ENCODE measurements at regions of chr19 and their contacts with region 1.

Region 1: GRCh38 chr19:6737284-6738046 is at the start of gene GPR108:
- DNase-seq: peak; percentile 100
- H3K4me3 ChIP-seq: peak within 1 kb of the TSS; percentile 72 to 97 (median 78)
- H3K4me3 Mint-ChIP-seq: peak within 1 kb of the TSS; percentile 95 to 97
- H3K27ac ChIP-seq: peak within 1 kb of the TSS; percentile 72 to 87
- H3K27ac Mint-ChIP-seq: peak within 1 kb of the TSS; percentile 89 to 98 (median 96)
- H3K4me1 ChIP-seq: peaks cover 50 to 56% of the 10 kb centered on the region in 2 donors
- H3K4me1 Mint-ChIP-seq: peaks cover 48% of the 10 kb centered on the region
- H3K27me3 ChIP-seq: peaks cover 0 to 8% of the 10 kb centered on the region in 2 donors
- H3K27me3 Mint-ChIP-seq: peaks cover 2 to 18% (median 17%) of the 10 kb centered on the region in 3 donors
- CTCF ChIP-seq: no peak
- polyA plus RNA-seq, gene GPR108: 90.9 to 147 (median 129) TPM

Region 2: DNA sequence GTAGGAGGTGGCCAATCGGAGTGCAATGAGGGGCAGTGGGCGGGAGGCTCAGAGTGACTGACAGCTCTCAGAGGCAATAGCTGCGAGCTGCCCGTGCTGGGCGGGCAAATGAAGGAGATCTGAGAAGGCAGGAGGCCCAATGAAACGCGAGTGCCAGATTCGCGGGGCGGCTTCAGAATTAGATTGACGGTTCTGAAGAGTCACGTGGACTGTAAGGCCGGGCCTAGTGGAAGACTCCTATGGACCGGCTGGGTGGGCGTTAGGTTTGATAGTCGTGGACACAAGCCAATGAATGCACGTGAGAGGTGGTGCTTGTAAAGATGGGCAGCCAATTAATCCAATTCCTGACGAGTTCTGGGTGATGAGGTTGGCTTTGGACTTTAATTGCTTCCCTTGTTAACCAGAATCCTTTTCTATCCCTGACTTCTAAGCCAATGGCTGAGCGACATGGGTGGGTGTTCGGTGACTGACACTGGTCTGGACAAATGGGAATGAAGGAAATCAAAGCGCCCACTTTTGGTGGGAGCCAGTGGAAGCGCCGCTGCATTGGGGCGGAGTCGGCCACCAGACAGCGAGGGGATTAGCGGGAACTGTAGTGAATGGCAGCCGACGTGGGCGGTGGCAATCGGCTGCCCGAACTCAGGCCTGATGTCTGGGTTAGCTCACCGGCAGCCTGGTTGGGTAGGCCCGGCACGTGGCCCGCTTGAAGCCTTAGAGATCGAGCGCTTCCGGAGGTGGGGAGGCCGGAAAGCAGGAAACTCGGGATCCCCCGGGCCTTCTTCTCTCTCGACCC is 312.3 kb before region 1 on chr19:
- intact Hi-C with region 1: loop called in 1 of 2 experiments (anchors 5 kb)
- DNase-seq: peak; percentile 100
- H3K4me3 ChIP-seq: peak overlapping the region in 2 of 3 experiments; percentile 29 to 52
- H3K4me3 Mint-ChIP-seq: peak overlapping the region; percentile 69 to 75
- H3K27ac ChIP-seq: peak overlapping the region; percentile 83 to 85
- H3K27ac Mint-ChIP-seq: peak overlapping the region; percentile 86 to 95 (median 91)
- H3K4me1 ChIP-seq: peaks cover 23 to 34% of the 10 kb centered on the region in 2 donors
- H3K4me1 Mint-ChIP-seq: peaks cover 37% of the 10 kb centered on the region
- H3K27me3 ChIP-seq: no peaks in the 10 kb centered on the region
- H3K27me3 Mint-ChIP-seq: peaks cover 0 to 12% (median 6%) of the 10 kb centered on the region in 3 donors
- CTCF ChIP-seq: no peak

Region 3: DNA sequence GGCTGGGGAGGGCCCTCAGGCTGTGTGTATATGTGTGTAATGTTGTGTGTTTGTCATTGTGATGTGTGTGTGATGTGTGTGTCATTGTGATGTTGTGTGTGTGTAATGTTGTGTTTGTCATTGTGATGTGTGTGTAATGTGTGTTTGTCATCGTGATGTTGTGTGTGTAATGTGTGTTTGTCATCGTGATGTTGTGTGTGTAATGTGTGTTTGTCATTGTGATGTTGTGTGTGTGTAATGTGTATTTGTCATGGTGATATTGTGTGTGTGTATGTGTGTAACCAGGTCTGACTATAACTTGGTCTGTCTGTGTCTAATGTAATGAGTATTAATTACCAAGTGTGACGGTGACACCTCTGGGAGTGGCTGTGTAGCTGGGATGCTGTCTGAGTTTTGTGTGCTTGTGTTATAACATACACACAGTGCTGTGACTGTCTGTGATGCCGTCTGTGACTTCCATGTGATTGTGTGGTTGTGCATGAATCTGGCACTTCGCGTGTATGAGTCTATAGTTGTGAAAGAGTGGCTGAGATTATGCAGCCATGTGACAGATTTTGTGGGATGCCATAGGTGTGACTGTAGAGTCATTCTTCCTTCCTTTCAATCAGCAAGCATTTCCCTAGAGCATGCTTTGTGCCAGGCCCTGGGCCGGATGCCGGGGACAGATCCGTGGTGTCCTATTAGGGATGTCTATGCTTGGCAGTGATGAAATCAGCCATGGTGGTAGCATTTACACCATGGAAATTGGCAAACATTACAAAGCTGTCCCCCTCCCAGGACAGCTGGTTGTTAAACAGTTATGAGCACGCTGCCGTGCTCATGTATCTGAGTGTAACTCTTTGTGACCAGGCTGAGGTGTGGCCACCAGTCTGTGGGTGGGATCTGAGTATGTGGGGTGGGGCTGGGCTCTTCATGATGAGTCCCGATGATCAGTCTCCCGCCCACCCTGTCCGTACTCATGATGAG is 73.9 kb before region 1 on chr19:
- intact Hi-C with region 1: loop called in 1 of 2 experiments (anchors 5 kb)
- DNase-seq: peak; percentile 87 to 94 (median 93)
- H3K4me3 ChIP-seq: no peak overlapping the region
- H3K4me3 Mint-ChIP-seq: no peak overlapping the region
- H3K27ac ChIP-seq: peak overlapping the region; percentile 16 to 77
- H3K27ac Mint-ChIP-seq: no peak overlapping the region
- H3K4me1 ChIP-seq: peaks cover 57 to 74% of the 10 kb centered on the region in 2 donors
- H3K4me1 Mint-ChIP-seq: peaks cover 23% of the 10 kb centered on the region
- H3K27me3 ChIP-seq: peaks cover 16 to 30% of the 10 kb centered on the region in 2 donors
- H3K27me3 Mint-ChIP-seq: peaks cover 13 to 41% (median 41%) of the 10 kb centered on the region in 3 donors
- CTCF ChIP-seq: no peak

Region 4: DNA sequence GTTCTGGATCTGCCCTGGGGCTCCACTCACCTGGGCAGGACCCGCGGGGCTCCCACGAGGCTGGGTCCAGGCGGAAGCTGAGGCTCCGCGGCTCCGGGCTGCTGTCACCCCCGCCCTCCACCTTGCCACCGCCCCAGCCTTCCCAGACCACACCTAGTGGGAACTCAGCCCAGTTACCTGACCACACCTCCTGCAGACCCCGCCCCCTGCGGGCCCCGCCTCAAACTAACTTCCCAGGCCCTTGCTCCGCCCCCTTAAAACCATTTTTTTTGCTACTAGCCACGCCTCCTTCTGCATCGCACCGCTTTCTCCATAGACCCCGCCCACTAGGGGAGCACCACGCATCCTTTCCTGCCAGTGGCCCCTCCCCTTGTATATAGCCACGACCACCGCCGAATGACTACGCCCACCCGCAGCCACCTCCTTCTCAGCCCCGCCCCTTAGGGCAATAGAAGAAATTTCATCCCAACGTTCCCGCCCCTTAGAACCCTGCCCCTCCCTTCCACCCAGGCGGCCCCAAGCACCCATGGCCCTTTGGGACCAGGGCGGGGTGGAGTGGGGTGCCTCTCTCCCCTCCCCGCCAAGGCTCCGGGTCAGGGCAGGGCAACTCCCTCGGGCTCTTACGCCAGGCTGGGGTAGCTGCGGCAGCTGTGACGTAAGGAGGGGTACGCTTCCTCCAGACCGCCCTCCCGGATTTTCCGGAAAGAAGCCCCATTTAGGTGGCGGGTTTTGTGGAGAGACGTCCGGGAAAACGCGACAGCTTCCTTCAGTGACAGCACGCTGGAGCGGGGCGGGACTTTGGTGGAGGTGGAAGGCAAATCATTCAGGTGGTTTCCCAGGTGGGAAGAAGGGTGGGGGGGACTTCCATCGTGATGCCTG is 30.1 kb after region 1 on chr19 and contains the start of gene SH2D3A:
- intact Hi-C with region 1: loop called in 1 of 2 experiments (anchors 2 kb)
- DNase-seq: peak; percentile 77 to 97 (median 78)
- H3K4me3 ChIP-seq: peak within 1 kb of the TSS; percentile 16 to 74 (median 37)
- H3K4me3 Mint-ChIP-seq: peak within 1 kb of the TSS; percentile 82 to 90
- H3K27ac ChIP-seq: peak within 1 kb of the TSS; percentile 30 to 70
- H3K27ac Mint-ChIP-seq: peak within 1 kb of the TSS; percentile 86 to 94 (median 91)
- H3K4me1 ChIP-seq: peaks cover 28 to 45% of the 10 kb centered on the region in 2 donors
- H3K4me1 Mint-ChIP-seq: peaks cover 44% of the 10 kb centered on the region
- H3K27me3 ChIP-seq: peaks cover 0 to 13% of the 10 kb centered on the region in 2 donors
- H3K27me3 Mint-ChIP-seq: peaks cover 12 to 17% (median 15%) of the 10 kb centered on the region in 3 donors
- CTCF ChIP-seq: no peak
- polyA plus RNA-seq, gene SH2D3A: 0.11 TPM in 1 of 3 donors, not detected in the others

Region 5: GRCh38 chr19:6801485-6802086 is 64.1 kb after region 1 on chr19:
- intact Hi-C with region 1: loop called in 1 of 2 experiments (anchors 2 kb)
- DNase-seq: peak; percentile 90 to 93 (median 91)
- H3K4me3 ChIP-seq: peak overlapping the region; percentile 26 to 73 (median 36)
- H3K4me3 Mint-ChIP-seq: peak overlapping the region; percentile 76 to 92
- H3K27ac ChIP-seq: peak overlapping the region; percentile 85 to 89
- H3K27ac Mint-ChIP-seq: peak overlapping the region; percentile 98 to 100 (median 99)
- H3K4me1 ChIP-seq: peaks cover 65 to 73% of the 10 kb centered on the region in 2 donors
- H3K4me1 Mint-ChIP-seq: peaks cover 73% of the 10 kb centered on the region
- H3K27me3 ChIP-seq: no peaks in the 10 kb centered on the region
- H3K27me3 Mint-ChIP-seq: no peaks in the 10 kb centered on the region
- CTCF ChIP-seq: no peak

Measured in CD14-positive monocyte (primary cell).